Thyroid gland (tissue), 4 donors: ENCODE measurements at regions of chr5 and their contacts with region 1.

Region 1: DNA sequence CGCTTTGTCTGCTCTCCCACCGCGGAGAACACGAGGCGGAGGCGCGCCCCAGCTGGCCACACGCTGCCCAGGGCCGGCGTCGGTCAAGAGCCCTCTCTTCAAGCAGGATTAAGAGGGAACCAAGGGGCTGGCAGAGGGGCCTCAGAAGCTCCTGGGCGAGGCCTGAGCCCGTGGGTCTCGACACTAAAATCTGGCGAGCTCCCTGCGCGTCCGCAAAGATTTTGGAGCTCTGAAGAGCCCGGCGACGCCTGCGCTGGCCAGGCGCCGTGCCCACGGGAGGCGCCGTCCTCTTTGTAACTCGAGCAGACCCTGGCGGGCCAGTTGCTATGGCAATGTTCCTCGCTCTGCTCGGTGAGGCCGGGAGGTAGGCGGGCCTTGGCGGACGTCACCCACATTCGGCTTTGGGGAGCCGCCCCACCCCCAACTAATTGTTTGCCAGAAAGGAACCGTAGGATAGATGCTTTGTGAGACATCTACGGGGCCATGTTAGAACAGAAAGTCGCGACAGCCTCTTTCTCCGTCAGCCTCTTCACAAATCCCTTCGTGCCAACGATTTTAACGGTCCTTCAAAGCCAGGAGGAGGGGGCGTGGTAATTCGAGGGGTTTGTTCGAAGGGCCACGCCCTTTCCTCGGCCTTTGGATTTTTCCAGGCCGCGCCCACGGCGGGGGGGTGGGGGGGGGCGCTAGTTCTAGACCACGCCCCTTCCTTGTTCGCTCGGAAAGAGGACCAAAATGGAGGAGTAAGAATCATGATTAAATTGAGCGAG is 714 bp upstream of the CNOT8 start:
- DNase-seq: peak; percentile 98 to 99
- H3K4me3 ChIP-seq: peak overlapping the region; percentile 35 to 77 (median 71)
- H3K27ac ChIP-seq: peak overlapping the region; percentile 98 to 100 (median 99)
- H3K4me1 ChIP-seq: peaks cover 23 to 43% of the 10 kb centered on the region in 2 donors
- H3K27me3 ChIP-seq: no peaks in the 10 kb centered on the region
- CTCF ChIP-seq: peak in 1 of 6 experiments; percentile 12
- POLR2A ChIP-seq: peak; percentile 56 to 91

Region 2: DNA sequence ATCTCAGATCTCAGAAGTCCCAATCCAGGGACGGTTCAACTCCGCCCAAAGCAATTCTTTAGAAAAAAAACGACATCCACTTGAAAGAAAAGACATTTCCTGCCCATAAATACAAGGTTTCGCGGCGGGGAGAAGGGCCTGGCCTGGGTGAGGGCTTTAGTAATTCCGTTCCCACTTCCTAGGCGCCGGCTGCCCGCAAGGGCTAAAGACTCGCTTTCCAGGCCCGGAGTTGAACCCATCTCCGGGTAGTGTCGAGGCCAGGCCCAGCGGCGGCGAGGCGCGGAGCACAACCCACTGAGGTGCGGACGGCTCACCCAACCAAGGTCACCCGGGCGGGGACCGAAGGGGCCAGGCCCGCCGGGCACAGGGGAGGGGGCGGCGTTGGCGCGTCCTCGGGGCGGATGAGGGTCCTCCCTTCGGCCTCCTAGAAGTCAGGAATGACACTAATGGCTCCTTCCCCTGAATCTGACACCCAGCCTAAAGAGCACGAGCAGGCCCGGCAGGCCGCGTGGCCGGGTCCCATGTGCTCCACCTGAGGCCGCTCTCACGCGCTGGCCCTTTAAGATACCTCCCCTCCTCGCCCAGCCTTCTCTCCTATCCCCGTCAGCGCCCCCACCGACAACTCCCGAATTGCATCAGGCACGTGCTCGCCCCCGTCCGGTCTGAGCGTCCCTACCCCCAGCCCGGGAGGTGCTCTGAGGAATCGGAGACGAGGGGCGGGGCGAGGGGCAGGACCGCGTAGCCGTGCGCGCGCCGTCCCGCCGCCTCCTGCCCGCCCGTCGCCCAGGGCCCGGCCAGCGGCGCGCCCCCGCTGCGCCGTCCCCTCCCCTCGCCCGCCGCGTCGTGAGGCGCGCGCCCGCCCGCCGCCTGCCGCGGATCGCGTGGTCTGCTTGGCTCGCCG is 103.0 kb before region 1 on chr5:
- intact Hi-C with region 1: loop called (anchors 10 kb)
- DNase-seq: peak; percentile 100
- H3K4me3 ChIP-seq: peak overlapping the region in 2 of 3 donors; percentile 75 to 93
- H3K27ac ChIP-seq: peak overlapping the region; percentile 98 to 100 (median 100)
- H3K4me1 ChIP-seq: peaks cover 34 to 41% of the 10 kb centered on the region in 2 donors
- H3K27me3 ChIP-seq: no peaks in the 10 kb centered on the region
- CTCF ChIP-seq: peak in 4 of 6 experiments; percentile 25 to 48 (median 41)
- POLR2A ChIP-seq: peak in 1 of 2 donors; percentile 89

Region 3: GRCh38 chr5:155540000-155540595 is 682.4 kb after region 1 on chr5:
- intact Hi-C with region 1: no loop called
- DNase-seq: no peak
- H3K4me3 ChIP-seq: no peak overlapping the region
- H3K27ac ChIP-seq: peak overlapping the region in 1 of 3 donors; percentile 24
- H3K4me1 ChIP-seq: peaks cover 6 to 14% of the 10 kb centered on the region in 2 donors
- H3K27me3 ChIP-seq: no peaks in the 10 kb centered on the region
- CTCF ChIP-seq: no peak
- POLR2A ChIP-seq: no peak